ENCODE measurements at regions of chr6 and their contacts with region 1.

Region 1: DNA sequence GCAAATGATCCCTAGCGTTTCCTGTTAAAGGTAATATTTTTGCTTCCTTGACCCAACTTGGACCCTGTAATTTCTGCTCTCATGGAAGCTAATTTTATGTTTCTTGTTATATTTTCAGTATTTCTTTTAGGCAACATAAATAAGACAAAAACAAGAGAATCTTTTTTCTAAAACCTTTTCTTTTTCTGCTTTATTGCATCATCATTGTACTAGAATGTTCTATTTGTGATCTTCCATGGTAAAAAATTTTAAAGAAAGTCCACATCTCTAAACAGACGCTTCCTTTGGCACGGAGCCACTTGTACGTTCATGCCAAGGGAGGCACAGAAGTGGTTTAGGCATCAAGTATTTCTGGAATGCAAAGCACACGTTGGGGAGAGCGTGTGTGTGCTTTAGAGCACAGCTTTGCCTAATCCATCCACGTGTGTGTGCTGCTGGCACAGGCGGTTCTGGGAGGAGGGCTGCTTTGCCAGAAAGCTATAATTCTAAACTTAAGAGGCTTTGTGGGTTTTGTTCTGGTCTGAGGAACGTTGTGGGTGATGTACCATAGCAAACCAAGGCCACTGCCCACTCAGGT is 98.3 kb downstream of the SASH1 start:
- DNase-seq: no peak
- H3K4me3 Mint-ChIP-seq: no peak overlapping the region
- H3K27ac Mint-ChIP-seq: no peak overlapping the region
- H3K4me1 Mint-ChIP-seq: peaks cover 12% of the 10 kb centered on the region
- H3K27me3 Mint-ChIP-seq: peaks cover 19% of the 10 kb centered on the region

Region 2: DNA sequence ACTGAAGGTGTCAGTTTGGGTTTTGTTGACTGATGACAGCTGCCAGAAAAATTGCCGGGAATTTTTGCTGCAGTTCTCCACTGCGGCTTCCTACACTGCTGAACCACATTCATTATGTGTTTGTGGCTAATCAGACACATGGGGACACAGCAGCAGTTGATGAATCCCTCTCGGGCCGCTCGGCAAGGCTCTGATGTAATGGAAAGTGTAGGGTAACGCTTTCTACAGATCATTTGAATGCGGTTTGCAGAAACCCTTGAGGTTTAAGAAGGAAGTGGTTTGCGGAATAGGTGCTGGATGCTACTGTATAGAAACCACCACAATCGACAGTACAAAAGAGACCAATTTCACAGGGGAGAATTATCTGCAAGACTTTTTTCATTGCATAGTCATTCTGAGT is 237.0 kb before region 1 on chr6:
- intact Hi-C with region 1: loop called (anchors 1 kb)
- DNase-seq: peak; percentile 65
- H3K4me3 Mint-ChIP-seq: peak overlapping the region; percentile 12
- H3K27ac Mint-ChIP-seq: peak overlapping the region; percentile 91
- H3K4me1 Mint-ChIP-seq: peaks cover 27% of the 10 kb centered on the region
- H3K27me3 Mint-ChIP-seq: peaks cover 70% of the 10 kb centered on the region

Region 3: GRCh38 chr6:148342357-148343046 is 98.5 kb before region 1 on chr6 and contains the start of gene SASH1:
- intact Hi-C with region 1: loop called (anchors 1 kb)
- DNase-seq: no peak
- H3K4me3 Mint-ChIP-seq: peak within 1 kb of the TSS; percentile 83
- H3K27ac Mint-ChIP-seq: peak within 1 kb of the TSS; percentile 63
- H3K4me1 Mint-ChIP-seq: peaks cover 8% of the 10 kb centered on the region
- H3K27me3 Mint-ChIP-seq: peaks cover 60% of the 10 kb centered on the region
- total RNA-seq, gene SASH1: 0.86 and 1.4 TPM in 2 replicates

Region 4: DNA sequence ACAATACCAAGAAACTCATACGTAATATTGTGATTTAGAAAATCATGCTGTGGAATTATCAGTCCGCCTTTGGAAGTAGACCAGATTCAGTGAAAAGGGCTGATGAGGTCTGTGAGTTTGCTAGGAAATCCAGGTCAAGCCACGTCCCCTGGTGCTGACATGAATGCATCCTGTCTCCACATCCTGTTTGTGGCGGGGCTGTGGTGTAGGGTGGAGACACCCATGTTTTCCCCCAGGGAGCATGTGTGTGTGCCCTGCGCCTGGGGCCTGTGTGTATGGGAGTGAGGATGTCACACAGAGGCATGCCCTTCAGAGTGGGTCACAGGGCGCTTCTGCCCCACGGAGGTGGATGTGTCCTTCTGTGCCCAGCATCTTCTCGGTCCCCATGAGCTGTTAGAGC is 10.7 kb after region 1 on chr6:
- intact Hi-C with region 1: loop called (anchors 1 kb)
- DNase-seq: peak; percentile 52
- H3K4me3 Mint-ChIP-seq: peak overlapping the region; percentile 49
- H3K27ac Mint-ChIP-seq: peak overlapping the region; percentile 64
- H3K4me1 Mint-ChIP-seq: peaks cover 32% of the 10 kb centered on the region
- H3K27me3 Mint-ChIP-seq: peaks cover 22% of the 10 kb centered on the region

Measured in activated T-helper 1 cell treated with anti-CD3 and anti-CD28 coated beads, Interleukin-12 subunit alpha, Interleukin-12 subunit beta, Interleukin-2, Interleukin-4 antibody, amounts not matched to agents 30 ng/mL and 10 ng/mL and 1 ng/mL, durations not matched to agents 14 hours and 24 hours and 36 hours (primary cell).